ENCODE measurements at regions of chr11 and their contacts with region 1.

Region 1: GRCh38 chr11:66592457-66593302 is at the starts of genes CCDC87 and CCS:
- H3K4me3 ChIP-seq: peak within 1 kb of the TSS; percentile 67
- H3K27ac ChIP-seq: peak within 1 kb of the TSS; percentile 11; the same call in 1 of the 2 replicates
- H3K4me1 ChIP-seq: no peaks in the 10 kb centered on the region
- CTCF ChIP-seq: peak; percentile 99

Region 2: GRCh38 chr11:66579017-66579606 is 13.6 kb before region 1 on chr11:
- CTCF ChIA-PET with region 1: interaction called, 49 read pairs
- POLR2A ChIA-PET with region 1: no interaction called
- H3K4me3 ChIP-seq: no peak overlapping the region
- H3K27ac ChIP-seq: no peak overlapping the region
- H3K4me1 ChIP-seq: no peaks in the 10 kb centered on the region
- CTCF ChIP-seq: peak; percentile 65; the same call in 1 of the 2 replicates

Region 3: GRCh38 chr11:66616379-66617154 is 23.9 kb after region 1 on chr11 and contains the start of gene RBM14:
- CTCF ChIA-PET with region 1: interaction called, 6 read pairs
- POLR2A ChIA-PET with region 1: interaction called, 32 read pairs
- H3K4me3 ChIP-seq: peak within 1 kb of the TSS; percentile 75
- H3K27ac ChIP-seq: peak within 1 kb of the TSS; percentile 95
- H3K4me1 ChIP-seq: 0 out of 2 replicates have a peak, but pooled peaks cover 3% of the 10 kb centered on the region
- CTCF ChIP-seq: no peak